ENCODE measurements at regions of chr11 and their contacts with region 1.

Region 1: GRCh38 chr11:33525789-33526188 is 174.8 kb downstream of the C11orf91 start:
- DNase-seq: no peak
- H3K4me3 ChIP-seq: no peak overlapping the region
- H3K27ac ChIP-seq: no peak overlapping the region
- H3K4me1 ChIP-seq: no peaks in the 10 kb centered on the region
- H3K27me3 ChIP-seq: peaks cover 15% of the 10 kb centered on the region
- CTCF ChIP-seq: no peak

Region 2: GRCh38 chr11:33651990-33652389 is 126.2 kb after region 1 on chr11:
- CTCF ChIA-PET with region 1: no interaction called
- POLR2A ChIA-PET with region 1: interaction called, 3 read pairs
- intact Hi-C with region 1: loop called (anchors 1 kb)
- DNase-seq: no peak
- H3K4me3 ChIP-seq: no peak overlapping the region
- H3K27ac ChIP-seq: no peak overlapping the region
- H3K4me1 ChIP-seq: no peaks in the 10 kb centered on the region
- H3K27me3 ChIP-seq: no peaks in the 10 kb centered on the region
- CTCF ChIP-seq: no peak

Region 3: GRCh38 chr11:33692013-33692504 is 166.3 kb after region 1 on chr11:
- CTCF ChIA-PET with region 1: no interaction called
- POLR2A ChIA-PET with region 1: no interaction called
- intact Hi-C with region 1: no loop called
- DNase-seq: peak; percentile 98
- H3K4me3 ChIP-seq: peak overlapping the region; percentile 6
- H3K27ac ChIP-seq: peak overlapping the region; percentile 31
- H3K4me1 ChIP-seq: peaks cover 60% of the 10 kb centered on the region
- H3K27me3 ChIP-seq: no peaks in the 10 kb centered on the region
- CTCF ChIP-seq: no peak

Region 4: GRCh38 chr11:34021977-34022735 is 496.4 kb after region 1 on chr11:
- CTCF ChIA-PET with region 1: no interaction called
- POLR2A ChIA-PET with region 1: no interaction called
- intact Hi-C with region 1: no loop called
- DNase-seq: no peak
- H3K4me3 ChIP-seq: no peak overlapping the region
- H3K27ac ChIP-seq: no peak overlapping the region
- H3K4me1 ChIP-seq: peaks cover under 1% of the 10 kb centered on the region
- H3K27me3 ChIP-seq: no peaks in the 10 kb centered on the region
- CTCF ChIP-seq: no peak

Measured in A673 (cell line).